HCT116 (cell line): ENCODE measurements at regions of chr6 and their contacts with region 1.

Region 1: DNA sequence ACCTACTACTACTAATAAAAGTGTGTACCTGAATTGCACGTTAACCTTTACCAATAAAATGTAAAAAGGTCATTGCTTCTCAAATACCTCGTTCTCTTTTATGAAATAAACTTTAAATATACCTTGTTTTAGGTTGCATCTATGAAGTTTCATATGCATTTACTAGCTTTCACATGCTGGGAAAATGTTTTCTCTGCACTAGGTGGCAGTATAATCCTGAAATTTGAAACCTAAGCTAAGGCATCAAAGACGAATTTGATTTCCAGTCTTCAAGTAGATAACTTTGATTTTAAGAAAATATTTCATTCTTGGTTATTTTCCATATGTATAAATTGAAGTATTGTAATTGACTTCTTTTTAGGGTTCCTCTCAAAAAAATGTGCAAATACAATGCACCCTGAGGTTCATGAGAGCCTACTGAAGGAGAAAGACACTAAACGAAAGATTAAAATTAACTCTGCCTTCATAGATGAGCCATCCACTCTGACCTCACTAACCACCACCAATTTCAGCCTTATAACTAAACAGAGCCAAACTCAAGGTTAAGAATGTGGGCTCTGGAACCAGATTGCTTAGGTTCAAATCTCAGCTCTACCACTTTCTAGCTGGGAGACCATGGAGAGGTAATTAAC is 7.3 kb upstream of the COL9A1 start:
- DNase-seq: peak; percentile 40
- ATAC-seq: no peak
- H3K4me3 ChIP-seq: no peak overlapping the region
- H3K27ac ChIP-seq: no peak overlapping the region
- H3K4me1 ChIP-seq: peaks cover 0 to 8% of the 10 kb centered on the region in 2 experiments; a peak in 2 of 4 replicates
- H3K27me3 ChIP-seq: peaks cover 73% of the 10 kb centered on the region
- CTCF ChIP-seq: peak; percentile 60 to 75 (median 64); a peak in 5 of 6 replicates
- POLR2A ChIP-seq: no peak
- RAD21 ChIP-seq: peak; percentile 72

Region 2: GRCh38 chr6:69379518-69379917 is 930.7 kb before region 1 on chr6:
- CTCF ChIA-PET with region 1: no interaction called
- POLR2A ChIA-PET with region 1: no interaction called
- RAD21 ChIA-PET with region 1: no interaction called
- intact Hi-C with region 1: no loop called
- DNase-seq: no peak
- ATAC-seq: no peak
- H3K4me3 ChIP-seq: no peak overlapping the region
- H3K27ac ChIP-seq: no peak overlapping the region
- H3K4me1 ChIP-seq: no peaks in the 10 kb centered on the region
- H3K27me3 ChIP-seq: no peaks in the 10 kb centered on the region
- CTCF ChIP-seq: no peak
- POLR2A ChIP-seq: no peak
- RAD21 ChIP-seq: no peak

Region 3: GRCh38 chr6:70289299-70289698 is 20.9 kb before region 1 on chr6:
- CTCF ChIA-PET with region 1: interaction called, 13 read pairs
- POLR2A ChIA-PET with region 1: no interaction called
- RAD21 ChIA-PET with region 1: no interaction called
- intact Hi-C with region 1: no loop called
- DNase-seq: no peak
- ATAC-seq: no peak
- H3K4me3 ChIP-seq: no peak overlapping the region
- H3K27ac ChIP-seq: no peak overlapping the region
- H3K4me1 ChIP-seq: no peaks in the 10 kb centered on the region
- H3K27me3 ChIP-seq: peaks cover 82% of the 10 kb centered on the region
- CTCF ChIP-seq: no peak; a peak in 1 of 6 replicates
- POLR2A ChIP-seq: no peak
- RAD21 ChIP-seq: 0 out of 2 replicates have a peak, but pooled peaks have one; percentile 9

Region 4: DNA sequence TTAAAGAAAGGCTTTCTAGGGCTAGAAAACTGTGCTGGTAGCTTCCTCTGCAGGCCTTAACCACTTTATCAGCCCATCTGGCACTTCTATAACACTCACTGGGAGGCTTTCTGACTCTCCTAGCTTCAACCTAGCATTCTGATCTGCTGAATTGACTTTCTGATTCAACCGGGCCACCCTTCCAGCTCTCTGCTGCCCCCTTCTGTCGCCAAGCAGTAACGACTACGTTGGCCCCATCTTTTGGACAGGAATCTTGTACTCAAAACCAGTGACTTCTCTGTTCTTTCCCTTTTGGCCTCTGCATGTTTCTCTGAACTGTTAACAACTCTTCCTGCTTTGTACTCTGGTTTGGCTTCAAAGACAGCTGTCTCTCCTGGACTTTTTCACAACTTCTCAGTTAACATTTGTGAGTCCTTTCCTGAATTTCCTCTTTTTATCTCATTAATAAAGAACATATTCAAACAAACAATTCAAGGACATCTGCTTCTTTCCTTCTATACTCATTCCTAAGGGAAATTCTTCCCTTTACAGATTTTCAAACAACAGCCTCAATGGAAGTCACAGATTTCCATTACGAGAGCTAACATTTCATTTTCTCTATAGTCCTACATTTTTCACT is 59.3 kb after region 1 on chr6:
- CTCF ChIA-PET with region 1: interaction called, 72 read pairs
- POLR2A ChIA-PET with region 1: no interaction called
- RAD21 ChIA-PET with region 1: interaction called, 4 to 5 read pairs
- intact Hi-C with region 1: loop called (anchors 1 kb)
- DNase-seq: peak; percentile 54
- ATAC-seq: peak; percentile 92
- H3K4me3 ChIP-seq: no peak overlapping the region
- H3K27ac ChIP-seq: no peak overlapping the region
- H3K4me1 ChIP-seq: peaks cover 0 to 2% of the 10 kb centered on the region in 2 experiments; a peak in 2 of 4 replicates
- H3K27me3 ChIP-seq: peaks cover 53% of the 10 kb centered on the region
- CTCF ChIP-seq: peak; percentile 77 to 93 (median 90); a peak in 5 of 6 replicates
- POLR2A ChIP-seq: no peak
- RAD21 ChIP-seq: peak; percentile 75

Region 5: DNA sequence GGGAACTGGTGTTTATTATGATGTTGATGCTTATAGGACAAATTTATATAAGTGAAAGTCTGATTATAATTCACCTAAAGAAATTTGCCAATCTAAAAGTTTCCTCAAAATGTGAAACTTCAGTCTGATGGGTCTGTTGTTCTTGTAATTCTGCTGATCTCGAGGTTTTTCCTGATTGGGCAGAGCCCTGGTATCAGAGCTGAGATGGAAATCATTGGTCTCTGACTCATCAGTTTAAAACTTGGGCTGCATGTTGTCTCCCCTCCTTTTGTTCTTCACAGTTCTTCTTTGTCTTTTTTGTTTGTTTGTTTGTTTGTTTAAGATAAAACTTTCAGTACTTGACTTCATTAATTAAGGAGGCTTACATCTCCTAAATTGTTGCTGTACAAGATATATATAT is 363.4 kb after region 1 on chr6:
- CTCF ChIA-PET with region 1: no interaction called
- POLR2A ChIA-PET with region 1: no interaction called
- RAD21 ChIA-PET with region 1: no interaction called
- intact Hi-C with region 1: loop called (anchors 5 kb)
- DNase-seq: no peak
- ATAC-seq: no peak
- H3K4me3 ChIP-seq: no peak overlapping the region
- H3K27ac ChIP-seq: no peak overlapping the region
- H3K4me1 ChIP-seq: peaks cover 9 to 25% of the 10 kb centered on the region in 2 experiments
- H3K27me3 ChIP-seq: no peaks in the 10 kb centered on the region
- CTCF ChIP-seq: no peak
- POLR2A ChIP-seq: no peak
- RAD21 ChIP-seq: no peak

Region 6: DNA sequence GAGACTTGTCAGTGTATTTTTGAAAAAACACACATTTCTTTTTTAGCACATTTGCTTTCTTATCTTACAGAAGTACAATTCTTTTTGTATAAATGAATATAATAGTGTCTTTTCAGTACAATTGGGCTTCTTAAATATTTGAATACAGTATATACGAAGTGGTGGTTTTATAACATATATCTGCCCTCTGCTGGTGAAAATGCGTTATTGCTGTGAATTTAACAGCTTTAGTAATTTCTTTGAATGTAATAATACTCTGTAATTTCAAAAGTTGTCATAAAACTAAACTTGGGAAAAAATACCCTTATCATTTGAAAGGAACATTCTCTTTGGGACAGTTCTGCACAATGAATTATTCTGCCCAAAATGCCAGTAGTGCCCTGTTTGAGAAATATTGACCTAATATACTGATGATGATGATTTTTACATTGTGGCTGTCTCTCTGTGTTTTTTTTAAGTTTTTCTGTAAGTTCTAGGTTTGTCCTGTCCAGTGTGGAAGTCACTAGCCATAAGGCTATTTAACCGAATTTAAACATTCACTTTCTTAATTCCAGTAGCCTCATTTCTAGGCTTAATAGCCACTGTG is 376.5 kb after region 1 on chr6:
- CTCF ChIA-PET with region 1: interaction called, 9 read pairs
- POLR2A ChIA-PET with region 1: no interaction called
- RAD21 ChIA-PET with region 1: interaction called, 4 read pairs
- intact Hi-C with region 1: loop called (anchors 2 kb)
- DNase-seq: no peak
- ATAC-seq: peak; percentile 62; the same call in 1 of the 2 replicates
- H3K4me3 ChIP-seq: no peak overlapping the region
- H3K27ac ChIP-seq: no peak overlapping the region
- H3K4me1 ChIP-seq: peaks cover 0 to 4% of the 10 kb centered on the region in 2 experiments; a peak in 1 of 4 replicates
- H3K27me3 ChIP-seq: no peaks in the 10 kb centered on the region
- CTCF ChIP-seq: peak; percentile 45 to 78 (median 58); a peak in 4 of 6 replicates
- POLR2A ChIP-seq: no peak
- RAD21 ChIP-seq: peak; percentile 65

Region 7: GRCh38 chr6:70753870-70754380 is 443.7 kb after region 1 on chr6:
- CTCF ChIA-PET with region 1: no interaction called
- POLR2A ChIA-PET with region 1: no interaction called
- RAD21 ChIA-PET with region 1: no interaction called
- intact Hi-C with region 1: no loop called
- DNase-seq: no peak
- ATAC-seq: no peak
- H3K4me3 ChIP-seq: no peak overlapping the region
- H3K27ac ChIP-seq: no peak overlapping the region
- H3K4me1 ChIP-seq: no peaks in the 10 kb centered on the region
- H3K27me3 ChIP-seq: no peaks in the 10 kb centered on the region
- CTCF ChIP-seq: no peak
- POLR2A ChIP-seq: no peak
- RAD21 ChIP-seq: no peak

Region 8: GRCh38 chr6:70955441-70956190 is 645.4 kb after region 1 on chr6:
- CTCF ChIA-PET with region 1: interaction called, 16 read pairs
- POLR2A ChIA-PET with region 1: no interaction called
- RAD21 ChIA-PET with region 1: no interaction called
- intact Hi-C with region 1: loop called (anchors 10 kb)
- DNase-seq: peak; percentile 60
- ATAC-seq: peak; percentile 100
- H3K4me3 ChIP-seq: no peak overlapping the region
- H3K27ac ChIP-seq: no peak overlapping the region
- H3K4me1 ChIP-seq: peaks cover 3 to 5% of the 10 kb centered on the region in 2 experiments; a peak in 2 of 4 replicates
- H3K27me3 ChIP-seq: peaks cover 21% of the 10 kb centered on the region; the same call in 1 of the 2 replicates
- CTCF ChIP-seq: peak; percentile 63 to 85 (median 78)
- POLR2A ChIP-seq: no peak
- RAD21 ChIP-seq: peak; percentile 77

Region 9: DNA sequence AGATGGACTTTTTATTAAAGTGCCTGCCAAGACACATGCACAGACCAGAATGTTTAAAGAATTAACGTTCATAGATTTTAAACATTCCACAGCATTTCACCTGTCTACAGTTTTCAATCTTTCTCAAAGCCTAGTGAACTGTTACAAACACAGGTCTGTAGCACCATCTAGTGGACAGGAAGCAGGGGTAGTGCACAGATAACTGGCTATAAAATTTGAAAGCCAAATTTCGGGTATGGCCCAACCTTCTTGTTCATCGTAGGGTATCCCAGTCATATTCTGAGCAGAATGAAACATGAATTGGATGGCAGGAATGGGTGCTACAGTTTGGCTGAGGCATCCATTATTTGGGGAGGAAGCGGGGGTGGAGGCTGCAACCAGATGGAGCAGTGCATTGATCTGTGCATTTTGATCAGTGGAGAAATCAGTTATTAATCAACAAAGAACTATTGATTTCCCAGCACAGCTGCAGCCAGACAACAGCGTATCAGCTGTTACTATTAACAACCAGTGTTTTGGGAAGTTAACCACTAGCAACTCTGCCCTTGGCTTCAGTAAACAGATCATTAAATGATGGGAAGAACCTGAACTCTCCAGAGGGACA is 702.8 kb after region 1 on chr6:
- CTCF ChIA-PET with region 1: interaction called, 15 read pairs
- POLR2A ChIA-PET with region 1: no interaction called
- RAD21 ChIA-PET with region 1: no interaction called
- intact Hi-C with region 1: loop called (anchors 2 kb)
- DNase-seq: peak; percentile 42
- ATAC-seq: peak; percentile 94
- H3K4me3 ChIP-seq: no peak overlapping the region
- H3K27ac ChIP-seq: no peak overlapping the region
- H3K4me1 ChIP-seq: no peaks in the 10 kb centered on the region
- H3K27me3 ChIP-seq: no peaks in the 10 kb centered on the region; the same call in 1 of the 2 replicates
- CTCF ChIP-seq: peak; percentile 51 to 90 (median 85); a peak in 5 of 6 replicates
- POLR2A ChIP-seq: no peak
- RAD21 ChIP-seq: peak; percentile 68